AG04450 (cell line): ENCODE measurements at regions of chr18 and their contacts with region 1.

Region 1: GRCh38 chr18:12890506-12890905 is 6.5 kb upstream of the PTPN2 start:
- DNase-seq: no peak
- H3K4me3 ChIP-seq: no peak overlapping the region
- H3K27ac ChIP-seq: peak overlapping the region; percentile 11
- H3K27me3 ChIP-seq: peaks cover 3% of the 10 kb centered on the region
- CTCF ChIP-seq: no peak

Region 2: DNA sequence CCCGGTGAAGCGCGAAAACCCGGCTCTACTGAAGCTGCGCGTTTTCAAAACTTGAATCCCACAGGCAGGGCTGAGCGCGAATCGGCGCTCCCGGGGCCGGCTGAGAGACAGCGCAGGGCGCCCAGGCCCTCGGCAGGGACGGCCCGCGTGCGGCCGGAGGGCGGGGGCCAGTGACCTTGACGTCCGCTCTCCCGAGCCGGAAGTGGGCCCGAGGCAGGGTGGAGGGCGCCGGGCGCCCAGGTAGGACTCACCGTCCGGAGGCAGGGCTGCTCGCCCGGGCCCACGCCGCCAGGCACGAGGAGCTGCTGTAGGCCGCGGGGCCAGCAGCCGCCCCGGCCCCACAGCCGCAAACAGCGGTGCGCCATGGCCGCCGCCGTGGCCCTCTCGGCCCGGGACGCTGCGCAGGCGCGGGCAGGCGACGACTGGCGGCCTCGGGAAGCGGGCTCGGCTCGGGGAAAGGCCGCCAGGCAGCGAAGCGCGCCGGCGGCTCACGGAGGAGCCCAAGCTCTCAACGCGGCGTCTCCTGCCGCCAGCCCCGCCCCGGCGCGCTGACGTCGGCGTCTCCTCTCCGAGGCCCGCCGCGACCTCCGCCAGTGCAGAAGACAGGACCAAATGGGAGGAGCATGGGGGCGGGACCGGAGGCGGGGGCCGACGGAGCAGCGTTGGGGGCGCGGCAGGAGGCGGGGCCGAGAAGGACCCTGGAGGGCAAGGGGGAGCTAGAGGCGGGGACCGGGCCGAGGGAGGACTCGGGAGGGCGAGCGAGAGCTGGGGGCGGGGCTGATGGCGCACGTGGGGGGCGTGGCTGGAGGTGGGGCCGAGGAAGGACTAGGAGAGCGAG is 513.6 kb before region 1 on chr18 and contains the start of gene AFG3L2:
- CTCF ChIA-PET with region 1: no interaction called
- POLR2A ChIA-PET with region 1: no interaction called
- DNase-seq: peak; percentile 98
- H3K4me3 ChIP-seq: peak within 1 kb of the TSS; percentile 82
- H3K27ac ChIP-seq: peak within 1 kb of the TSS; percentile 98
- H3K27me3 ChIP-seq: no peaks in the 10 kb centered on the region
- CTCF ChIP-seq: no peak
- polyA plus RNA-seq, gene AFG3L2: 30.3 and 38.0 TPM in 2 replicates

Region 3: DNA sequence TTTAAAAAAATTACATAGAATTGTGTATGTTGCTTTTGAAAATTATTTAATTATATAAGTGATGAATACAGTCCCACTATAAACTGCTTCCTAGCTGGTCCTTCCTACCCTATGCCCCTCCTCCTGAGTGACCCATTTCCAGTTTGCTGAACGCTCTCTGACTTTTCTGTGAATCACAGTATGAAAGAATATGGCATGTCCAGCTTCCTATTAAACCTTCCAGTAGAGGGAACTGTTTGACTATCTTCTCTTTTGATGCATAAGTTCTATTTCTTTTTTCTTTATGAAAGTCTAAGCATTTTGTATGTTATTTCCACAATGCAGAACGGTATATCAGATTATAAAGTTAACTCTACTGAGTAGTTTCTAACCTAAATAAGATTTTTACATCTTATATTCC is 146.4 kb before region 1 on chr18:
- CTCF ChIA-PET with region 1: interaction called, 126 read pairs
- POLR2A ChIA-PET with region 1: no interaction called
- DNase-seq: peak; percentile 47
- H3K4me3 ChIP-seq: no peak overlapping the region
- H3K27ac ChIP-seq: no peak overlapping the region
- H3K27me3 ChIP-seq: no peaks in the 10 kb centered on the region
- CTCF ChIP-seq: peak; percentile 73

Region 4: GRCh38 chr18:12862467-12862866 is 28.0 kb before region 1 on chr18:
- CTCF ChIA-PET with region 1: interaction called, 13 read pairs
- POLR2A ChIA-PET with region 1: no interaction called
- DNase-seq: no peak
- H3K4me3 ChIP-seq: no peak overlapping the region
- H3K27ac ChIP-seq: no peak overlapping the region
- H3K27me3 ChIP-seq: no peaks in the 10 kb centered on the region
- CTCF ChIP-seq: no peak

Region 5: GRCh38 chr18:12911025-12911928 is 20.8 kb after region 1 on chr18:
- CTCF ChIA-PET with region 1: interaction called, 11 read pairs
- POLR2A ChIA-PET with region 1: no interaction called
- DNase-seq: no peak
- H3K4me3 ChIP-seq: no peak overlapping the region
- H3K27ac ChIP-seq: no peak overlapping the region
- H3K27me3 ChIP-seq: peaks cover 14% of the 10 kb centered on the region
- CTCF ChIP-seq: no peak

Region 6: DNA sequence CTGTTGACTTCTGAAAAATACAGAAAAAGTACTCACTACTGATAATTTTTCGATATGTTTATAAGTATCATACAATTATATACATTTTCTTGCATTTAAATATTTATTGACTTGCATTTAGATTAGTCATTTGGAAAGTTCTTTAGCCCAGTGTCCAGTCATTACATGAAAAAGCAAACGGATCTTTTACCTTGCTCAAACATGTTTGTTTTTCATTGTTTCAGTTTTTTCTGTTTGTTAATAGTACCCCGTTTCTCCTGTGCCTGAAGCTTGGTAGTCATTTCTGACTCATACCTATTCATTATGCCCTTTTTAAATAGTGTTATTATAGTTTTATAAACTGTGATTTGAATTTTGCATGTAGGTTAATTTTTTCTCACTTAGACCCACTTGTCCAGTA is 128.8 kb after region 1 on chr18:
- CTCF ChIA-PET with region 1: no interaction called
- POLR2A ChIA-PET with region 1: no interaction called
- DNase-seq: no peak
- H3K4me3 ChIP-seq: no peak overlapping the region
- H3K27ac ChIP-seq: no peak overlapping the region
- H3K27me3 ChIP-seq: no peaks in the 10 kb centered on the region
- CTCF ChIP-seq: no peak

Region 7: GRCh38 chr18:13051950-13052349 is 161.4 kb after region 1 on chr18:
- CTCF ChIA-PET with region 1: no interaction called
- POLR2A ChIA-PET with region 1: no interaction called
- DNase-seq: no peak
- H3K4me3 ChIP-seq: no peak overlapping the region
- H3K27ac ChIP-seq: no peak overlapping the region
- H3K27me3 ChIP-seq: no peaks in the 10 kb centered on the region
- CTCF ChIP-seq: no peak

Region 8: GRCh38 chr18:13471971-13472628 is 581.6 kb after region 1 on chr18:
- CTCF ChIA-PET with region 1: no interaction called
- POLR2A ChIA-PET with region 1: no interaction called
- DNase-seq: no peak
- H3K4me3 ChIP-seq: no peak overlapping the region
- H3K27ac ChIP-seq: no peak overlapping the region
- H3K27me3 ChIP-seq: no peaks in the 10 kb centered on the region
- CTCF ChIP-seq: no peak